Activated CD8-positive, alpha-beta T cell treated with anti-CD3 and anti-CD28 coated beads for 36 hours (primary cell): ENCODE measurements at regions of chr1 and their contacts with region 1.

Region 1: DNA sequence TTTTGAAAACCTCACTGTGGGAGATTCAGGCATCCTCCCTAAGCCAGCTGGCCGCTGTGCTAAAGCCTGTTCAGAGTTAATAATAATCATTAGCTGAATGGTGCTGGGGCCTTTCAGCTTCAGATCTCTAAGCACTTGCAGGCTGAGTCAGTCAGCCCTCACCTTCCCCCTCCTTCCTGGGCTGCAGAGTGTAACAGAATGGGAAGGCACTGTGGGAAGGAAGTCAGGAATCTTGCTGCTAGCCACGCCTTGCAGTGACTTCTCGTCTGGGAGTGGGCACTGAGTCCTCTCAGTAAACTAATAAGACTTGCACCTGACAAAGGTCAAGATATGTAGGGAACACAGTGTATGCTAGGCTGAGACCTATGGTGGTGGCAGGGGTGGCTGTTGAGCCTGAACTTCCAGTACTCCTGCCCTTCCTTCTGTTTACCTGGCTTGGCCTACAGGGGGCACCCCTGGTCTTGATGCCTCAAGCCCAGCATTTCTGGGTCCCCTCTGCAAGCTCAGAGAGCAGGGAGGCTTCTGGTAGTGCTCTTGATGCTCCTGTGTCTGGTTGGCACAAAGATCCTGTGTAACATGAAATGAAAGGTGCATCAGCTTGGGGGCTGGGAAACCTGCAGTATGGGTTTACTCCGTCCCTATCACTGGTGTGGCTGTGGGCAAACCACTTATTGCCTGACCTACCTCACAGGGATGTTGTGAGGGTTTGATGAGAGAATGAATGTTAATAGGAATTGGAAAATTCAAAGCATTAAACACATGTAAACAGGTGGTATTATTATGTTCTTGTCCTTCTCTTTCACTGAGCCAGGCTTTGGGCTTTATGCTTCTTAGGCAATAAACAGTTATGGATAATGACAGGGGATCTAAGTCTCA is 6.0 kb downstream of the CYB561D1 start:
- DNase-seq: peak; percentile 77
- ATAC-seq: peak; percentile 37
- H3K4me3 Mint-ChIP-seq: no peak overlapping the region
- H3K27ac Mint-ChIP-seq: peak overlapping the region; percentile 79
- H3K4me1 Mint-ChIP-seq: peaks cover 86% of the 10 kb centered on the region
- H3K27me3 Mint-ChIP-seq: no peaks in the 10 kb centered on the region
- CTCF ChIP-seq: peak; percentile 64

Region 2: GRCh38 chr1:109426278-109427170 is 73.4 kb before region 1 on chr1 and contains the start of gene PSMA5:
- CTCF ChIA-PET with region 1: interaction called, 12 read pairs
- POLR2A ChIA-PET with region 1: interaction called, 11 read pairs
- intact Hi-C with region 1: no loop called
- DNase-seq: peak; percentile 98
- ATAC-seq: peak; percentile 94
- H3K4me3 Mint-ChIP-seq: peak within 1 kb of the TSS; percentile 93
- H3K27ac Mint-ChIP-seq: peak within 1 kb of the TSS; percentile 96
- H3K4me1 Mint-ChIP-seq: peaks cover 28% of the 10 kb centered on the region
- H3K27me3 Mint-ChIP-seq: no peaks in the 10 kb centered on the region
- CTCF ChIP-seq: no peak
- total RNA-seq, gene PSMA5: 192 to 210 TPM

Region 3: GRCh38 chr1:109516872-109517271 is 17.0 kb after region 1 on chr1:
- CTCF ChIA-PET with region 1: interaction called, 1,390 read pairs
- POLR2A ChIA-PET with region 1: interaction called, 4 read pairs
- intact Hi-C with region 1: no loop called
- DNase-seq: no peak
- ATAC-seq: no peak
- H3K4me3 Mint-ChIP-seq: no peak overlapping the region
- H3K27ac Mint-ChIP-seq: no peak overlapping the region
- H3K4me1 Mint-ChIP-seq: peaks cover 2% of the 10 kb centered on the region
- H3K27me3 Mint-ChIP-seq: no peaks in the 10 kb centered on the region
- CTCF ChIP-seq: no peak

Region 4: DNA sequence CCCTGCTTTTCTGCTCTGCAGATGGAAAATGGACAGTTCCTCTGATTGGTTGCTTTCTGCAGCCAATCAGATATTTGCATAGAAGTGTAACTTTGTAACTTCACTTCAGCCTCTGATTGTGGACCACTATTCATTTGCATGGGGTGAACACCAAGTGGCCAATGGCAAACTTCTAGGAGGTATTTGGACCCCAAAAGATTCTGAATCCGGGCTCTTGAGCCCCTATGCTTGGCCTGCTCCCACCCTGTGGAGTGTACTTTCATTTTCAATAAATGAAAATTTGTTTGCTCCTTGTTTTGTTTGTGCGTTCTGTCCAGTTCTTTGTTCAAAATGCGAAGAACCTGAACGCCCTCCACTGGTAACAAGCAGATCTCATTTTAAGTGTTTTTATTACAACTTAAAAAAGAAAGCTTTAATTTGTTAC is 149.6 kb after region 1 on chr1:
- CTCF ChIA-PET with region 1: no interaction called
- POLR2A ChIA-PET with region 1: no interaction called
- intact Hi-C with region 1: no loop called
- DNase-seq: no peak
- ATAC-seq: no peak
- H3K4me3 Mint-ChIP-seq: no peak overlapping the region
- H3K27ac Mint-ChIP-seq: no peak overlapping the region
- H3K4me1 Mint-ChIP-seq: no peaks in the 10 kb centered on the region
- H3K27me3 Mint-ChIP-seq: peaks cover 3% of the 10 kb centered on the region
- CTCF ChIP-seq: peak; percentile 32